AG04449 (cell line): ENCODE measurements at regions of chr16 and their contacts with region 1.

Region 1: GRCh38 chr16:67296422-67296821 is 17.1 kb downstream of the PLEKHG4 start:
- DNase-seq: no peak
- H3K4me3 ChIP-seq: no peak overlapping the region
- CTCF ChIP-seq: no peak

Region 2: DNA sequence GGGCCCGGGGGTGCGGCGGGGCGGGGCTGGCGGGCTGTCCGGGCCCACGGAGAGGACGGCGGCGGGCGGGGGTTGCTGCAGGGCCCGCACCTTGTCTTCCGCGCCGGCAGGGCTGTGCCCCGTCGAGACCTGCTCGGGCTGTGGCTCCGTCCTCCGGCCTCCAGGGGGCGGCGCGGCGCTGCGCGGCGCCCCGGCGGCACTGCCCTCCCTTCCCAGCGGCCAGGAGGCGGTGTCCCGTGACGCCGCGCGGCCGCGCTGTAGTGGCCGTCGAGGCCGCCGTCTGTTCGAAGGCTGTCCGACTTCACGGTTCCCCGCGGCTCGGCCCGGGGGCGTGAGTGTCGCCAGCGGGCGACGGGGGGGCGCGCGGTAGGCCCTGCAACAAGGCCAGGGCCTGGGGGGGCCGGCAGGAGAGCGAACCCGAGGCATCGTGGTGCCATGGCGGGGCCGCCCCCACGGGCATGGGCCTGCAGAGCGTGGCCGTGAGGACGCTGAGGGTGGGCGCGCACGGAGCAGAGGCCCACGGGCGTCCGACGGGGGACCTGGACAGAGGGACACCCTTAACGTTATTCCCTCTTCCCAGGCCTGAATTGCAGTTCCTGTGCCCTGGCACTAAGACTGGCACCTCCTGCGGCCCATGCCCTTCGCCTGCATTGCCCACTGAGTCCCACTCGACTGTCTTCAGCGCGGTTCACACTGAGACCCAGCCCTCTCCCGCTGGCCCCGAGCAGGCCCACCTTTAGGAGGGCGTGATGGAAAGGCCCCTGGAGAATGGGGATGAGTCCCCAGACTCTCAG is 16.9 kb before region 1 on chr16 and contains the start of gene PLEKHG4:
- CTCF ChIA-PET with region 1: interaction called, 30 read pairs
- POLR2A ChIA-PET with region 1: no interaction called
- DNase-seq: no peak
- H3K4me3 ChIP-seq: peak within 1 kb of the TSS; percentile 71
- CTCF ChIP-seq: peak; percentile 61

Region 3: DNA sequence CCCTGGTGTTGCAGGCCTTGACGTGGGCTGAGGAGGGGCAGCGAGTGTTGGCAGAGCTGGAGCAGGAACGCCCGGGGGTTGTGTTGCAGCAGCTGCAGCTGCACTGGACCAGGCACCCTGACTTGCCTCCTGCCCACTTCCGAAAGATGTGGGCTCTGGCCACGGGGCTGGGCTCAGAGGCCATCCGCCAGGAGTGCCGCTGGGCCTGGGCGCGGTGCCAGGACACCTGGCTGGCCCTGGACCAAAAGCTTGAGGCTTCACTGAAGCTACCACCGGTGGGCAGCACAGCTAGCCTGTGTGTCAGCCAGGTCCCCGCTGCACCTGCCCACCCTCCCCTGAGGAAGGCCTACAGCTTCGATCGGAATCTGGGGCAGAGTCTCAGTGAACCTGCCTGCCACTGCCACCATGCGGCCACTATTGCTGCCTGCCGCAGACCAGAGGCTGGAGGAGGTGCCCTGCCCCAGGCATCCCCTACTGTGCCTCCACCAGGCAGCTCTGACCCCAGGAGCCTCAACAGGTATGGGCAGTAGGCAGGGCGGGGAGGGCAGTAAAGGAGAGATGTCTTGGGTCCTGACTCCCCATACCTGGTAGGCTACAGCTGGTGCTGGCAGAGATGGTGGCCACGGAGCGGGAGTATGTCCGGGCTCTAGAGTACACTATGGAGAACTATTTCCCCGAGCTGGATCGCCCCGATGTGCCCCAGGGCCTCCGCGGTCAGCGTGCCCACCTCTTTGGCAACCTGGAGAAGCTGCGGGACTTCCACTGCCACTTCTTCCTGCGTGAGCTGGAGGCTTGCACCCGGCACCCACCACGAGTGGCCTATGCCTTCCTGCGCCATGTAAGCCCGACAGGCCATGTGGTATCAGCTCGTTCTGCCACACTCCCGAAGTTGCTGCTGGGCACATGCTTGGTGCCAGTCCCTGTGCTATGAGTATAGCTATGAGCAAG is 11.4 kb before region 1 on chr16:
- CTCF ChIA-PET with region 1: interaction called, 30 read pairs
- POLR2A ChIA-PET with region 1: no interaction called
- DNase-seq: no peak
- H3K4me3 ChIP-seq: no peak overlapping the region
- CTCF ChIP-seq: peak; percentile 60

Region 4: DNA sequence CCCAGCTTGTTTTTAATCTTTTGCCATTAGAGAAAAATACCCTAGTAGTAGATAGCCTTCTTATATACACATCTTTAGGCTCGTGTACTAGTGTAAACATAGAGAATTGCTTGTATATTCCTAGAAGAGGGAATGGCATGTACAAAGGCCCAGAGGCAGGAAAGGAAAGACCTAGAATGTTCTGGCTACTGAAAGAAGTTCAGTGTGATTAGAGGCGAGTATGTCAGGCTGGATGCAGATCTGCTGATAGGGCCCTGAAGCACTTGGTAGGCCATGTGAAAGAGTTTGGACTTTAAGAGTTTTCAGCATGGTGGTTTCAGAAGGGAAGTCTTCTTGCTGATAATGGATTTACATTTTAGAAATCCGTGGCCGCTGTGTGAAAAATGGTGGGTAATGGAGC is 283.3 kb after region 1 on chr16:
- CTCF ChIA-PET with region 1: no interaction called
- POLR2A ChIA-PET with region 1: no interaction called
- DNase-seq: no peak
- H3K4me3 ChIP-seq: no peak overlapping the region
- CTCF ChIP-seq: no peak